Activated CD4-positive, alpha-beta memory T cell treated with anti-CD3 and anti-CD28 coated beads for 36 hours (primary cell): ENCODE measurements at regions of chr10 and their contacts with region 1.

Region 1: GRCh38 chr10:101840741-101841453 is 2.7 kb downstream of the KCNIP2 start:
- DNase-seq: peak; percentile 88
- H3K4me3 Mint-ChIP-seq: peak overlapping the region; percentile 74
- H3K27ac Mint-ChIP-seq: no peak overlapping the region
- H3K4me1 Mint-ChIP-seq: peaks cover 48% of the 10 kb centered on the region
- H3K27me3 Mint-ChIP-seq: peaks cover 2% of the 10 kb centered on the region

Region 2: GRCh38 chr10:101782811-101783735 is 57.8 kb before region 1 on chr10 and contains the start of gene NPM3:
- CTCF ChIA-PET with region 1: interaction called, 8 read pairs
- POLR2A ChIA-PET with region 1: no interaction called
- intact Hi-C with region 1: loop called (anchors 2 kb)
- DNase-seq: peak; percentile 92
- H3K4me3 Mint-ChIP-seq: peak within 1 kb of the TSS; percentile 98
- H3K27ac Mint-ChIP-seq: peak within 1 kb of the TSS; percentile 83
- H3K4me1 Mint-ChIP-seq: peaks cover 67% of the 10 kb centered on the region
- H3K27me3 Mint-ChIP-seq: peaks cover 10% of the 10 kb centered on the region
- total RNA-seq, gene NPM3: 168 to 172 TPM

Region 3: DNA sequence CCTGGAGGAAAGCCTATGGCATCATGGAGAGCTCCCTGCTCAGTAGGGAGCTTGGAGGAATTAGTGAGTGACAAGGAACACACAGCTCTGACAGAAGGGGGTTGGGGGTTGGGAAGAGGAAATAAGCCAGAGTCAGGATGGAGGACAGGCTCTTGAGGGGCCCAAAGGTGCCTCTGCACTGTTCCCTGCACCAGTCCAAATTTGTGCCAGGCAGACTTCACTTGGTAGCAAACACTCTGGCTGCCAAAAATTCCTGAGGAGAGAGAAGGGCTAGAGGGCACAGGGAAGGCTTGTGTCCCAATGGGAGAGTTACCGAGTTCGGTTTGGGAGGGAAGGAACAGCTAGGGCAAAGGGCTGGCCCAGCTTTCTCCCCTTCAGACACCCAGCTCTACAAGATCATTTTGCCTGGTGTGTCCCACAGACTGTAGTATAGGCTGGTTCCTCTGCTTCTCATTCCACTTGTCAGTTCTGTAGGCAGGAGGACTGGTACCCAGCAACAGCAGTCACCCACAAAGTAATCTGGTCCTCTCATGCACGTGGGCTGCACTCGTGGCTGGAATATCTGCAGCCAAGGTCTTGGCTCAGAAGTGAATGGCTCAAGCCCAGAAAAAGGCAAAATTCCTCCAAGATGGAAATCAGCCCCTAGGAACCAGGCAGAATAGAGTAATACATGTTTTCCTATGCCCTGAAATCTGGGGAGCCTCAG is 10.7 kb after region 1 on chr10:
- CTCF ChIA-PET with region 1: interaction called, 36 read pairs
- POLR2A ChIA-PET with region 1: no interaction called
- intact Hi-C with region 1: no loop called
- DNase-seq: no peak
- H3K4me3 Mint-ChIP-seq: no peak overlapping the region
- H3K27ac Mint-ChIP-seq: no peak overlapping the region
- H3K4me1 Mint-ChIP-seq: no peaks in the 10 kb centered on the region
- H3K27me3 Mint-ChIP-seq: no peaks in the 10 kb centered on the region

Region 4: DNA sequence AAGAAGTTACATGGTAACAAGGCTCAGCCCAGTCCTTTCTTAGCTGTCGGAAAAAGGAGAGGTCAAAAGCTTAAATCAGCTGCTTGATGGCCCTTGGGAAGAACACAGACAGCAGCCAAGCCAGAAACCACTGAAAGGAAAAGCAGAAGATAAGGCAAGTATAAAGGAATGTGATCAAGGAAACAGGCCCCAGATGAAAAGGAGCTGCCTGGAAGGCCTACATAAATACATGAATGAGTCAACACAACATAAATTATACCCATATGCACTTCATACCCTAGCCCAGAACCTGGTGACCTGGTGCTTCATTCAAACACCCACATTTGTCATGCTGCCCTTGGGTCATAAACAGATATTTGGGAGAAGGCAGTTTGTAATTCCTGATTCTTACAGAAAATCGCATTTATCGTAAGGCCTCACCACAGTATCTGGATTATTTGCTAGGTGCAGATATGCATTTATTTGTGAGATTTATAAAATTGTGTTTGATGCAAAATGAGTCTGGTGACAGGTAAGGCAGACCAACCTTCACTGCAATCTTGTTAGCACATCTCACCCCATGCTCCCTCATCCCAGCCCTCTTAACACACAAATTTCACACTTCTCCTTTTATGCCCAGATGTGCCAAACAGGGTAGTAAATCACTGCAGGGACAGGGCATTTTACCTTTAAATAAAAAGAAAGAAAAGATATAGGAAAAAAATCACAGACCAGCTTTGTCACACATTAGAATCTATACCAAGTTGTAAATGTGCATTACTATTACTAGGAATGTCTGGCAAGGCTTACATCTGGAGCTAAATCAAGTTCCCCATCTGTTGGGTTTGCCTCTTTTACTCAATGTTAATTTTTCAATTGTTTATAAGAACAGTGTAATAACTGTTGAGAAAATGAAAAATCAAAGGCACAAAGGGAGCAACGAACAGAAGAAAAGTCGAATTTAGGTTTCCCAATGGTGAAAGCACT is 97.7 kb after region 1 on chr10:
- CTCF ChIA-PET with region 1: interaction called, 5 read pairs
- POLR2A ChIA-PET with region 1: no interaction called
- intact Hi-C with region 1: loop called (anchors 10 kb)
- DNase-seq: no peak
- H3K4me3 Mint-ChIP-seq: no peak overlapping the region
- H3K27ac Mint-ChIP-seq: no peak overlapping the region
- H3K4me1 Mint-ChIP-seq: no peaks in the 10 kb centered on the region
- H3K27me3 Mint-ChIP-seq: no peaks in the 10 kb centered on the region

Region 5: GRCh38 chr10:102001435-102002068 is 160.7 kb after region 1 on chr10:
- CTCF ChIA-PET with region 1: interaction called, 248 read pairs
- POLR2A ChIA-PET with region 1: interaction called, 3 read pairs
- intact Hi-C with region 1: no loop called
- DNase-seq: peak; percentile 10
- H3K4me3 Mint-ChIP-seq: no peak overlapping the region
- H3K27ac Mint-ChIP-seq: no peak overlapping the region
- H3K4me1 Mint-ChIP-seq: peaks cover 18% of the 10 kb centered on the region
- H3K27me3 Mint-ChIP-seq: no peaks in the 10 kb centered on the region

Region 6: GRCh38 chr10:102024799-102025198 is 183.9 kb after region 1 on chr10:
- CTCF ChIA-PET with region 1: interaction called, 11 read pairs
- POLR2A ChIA-PET with region 1: no interaction called
- intact Hi-C with region 1: no loop called
- DNase-seq: no peak
- H3K4me3 Mint-ChIP-seq: no peak overlapping the region
- H3K27ac Mint-ChIP-seq: no peak overlapping the region
- H3K4me1 Mint-ChIP-seq: peaks cover 2% of the 10 kb centered on the region
- H3K27me3 Mint-ChIP-seq: no peaks in the 10 kb centered on the region

Region 7: GRCh38 chr10:102072673-102073527 is 232.0 kb after region 1 on chr10:
- CTCF ChIA-PET with region 1: interaction called, 74 read pairs
- POLR2A ChIA-PET with region 1: no interaction called
- intact Hi-C with region 1: loop called (anchors 1 kb)
- DNase-seq: peak; percentile 86
- H3K4me3 Mint-ChIP-seq: no peak overlapping the region
- H3K27ac Mint-ChIP-seq: no peak overlapping the region
- H3K4me1 Mint-ChIP-seq: peaks cover 6% of the 10 kb centered on the region
- H3K27me3 Mint-ChIP-seq: no peaks in the 10 kb centered on the region